ENCODE measurements at regions of chr17 and their contacts with region 1.

Region 1: GRCh38 chr17:5706577-5707216 is 122.4 kb upstream of the NLRP1 start:
- DNase-seq: peak; percentile 18 to 43
- ATAC-seq: peak; percentile 79 to 80
- H3K4me3 ChIP-seq: no peak overlapping the region
- H3K27ac ChIP-seq: no peak overlapping the region
- H3K4me1 ChIP-seq: peaks cover 0 to 3% of the 10 kb centered on the region in 2 donors
- H3K27me3 ChIP-seq: peaks cover 0 to 10% (median 0%) of the 10 kb centered on the region in 3 donors
- CTCF ChIP-seq: peak; percentile 43 to 73 (median 64)
- POLR2A ChIP-seq: no peak

Region 2: DNA sequence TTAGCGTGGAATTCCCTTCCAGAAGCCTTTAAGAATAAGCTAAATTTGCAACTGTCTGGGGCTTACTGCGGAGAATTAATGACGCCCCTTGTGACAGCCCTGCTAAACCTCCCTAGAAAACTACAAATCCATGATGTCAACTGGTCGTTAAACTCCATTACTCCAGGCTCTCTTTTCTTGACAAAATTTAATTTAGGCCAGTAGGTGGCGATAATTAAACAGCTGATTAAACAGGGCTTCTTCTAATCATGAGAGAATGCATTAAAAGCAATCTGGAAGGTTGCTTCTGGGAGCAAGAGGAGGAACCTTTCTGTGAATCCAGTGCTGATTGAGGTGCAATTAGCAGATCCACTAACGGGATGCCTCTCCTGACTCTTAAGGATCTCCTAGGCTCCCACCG is 114.3 kb before region 1 on chr17:
- in situ Hi-C with region 1: loop called (anchors 5 to 25 kb)
- intact Hi-C with region 1: loop called (anchors 1 kb)
- DNase-seq: no peak
- ATAC-seq: peak in 1 of 2 donors; percentile 36
- H3K4me3 ChIP-seq: no peak overlapping the region
- H3K27ac ChIP-seq: no peak overlapping the region
- H3K4me1 ChIP-seq: no peaks in the 10 kb centered on the region
- H3K27me3 ChIP-seq: peaks cover 0 to 17% (median 16%) of the 10 kb centered on the region in 3 donors
- CTCF ChIP-seq: peak; percentile 50 to 68 (median 56)
- POLR2A ChIP-seq: no peak

Region 3: DNA sequence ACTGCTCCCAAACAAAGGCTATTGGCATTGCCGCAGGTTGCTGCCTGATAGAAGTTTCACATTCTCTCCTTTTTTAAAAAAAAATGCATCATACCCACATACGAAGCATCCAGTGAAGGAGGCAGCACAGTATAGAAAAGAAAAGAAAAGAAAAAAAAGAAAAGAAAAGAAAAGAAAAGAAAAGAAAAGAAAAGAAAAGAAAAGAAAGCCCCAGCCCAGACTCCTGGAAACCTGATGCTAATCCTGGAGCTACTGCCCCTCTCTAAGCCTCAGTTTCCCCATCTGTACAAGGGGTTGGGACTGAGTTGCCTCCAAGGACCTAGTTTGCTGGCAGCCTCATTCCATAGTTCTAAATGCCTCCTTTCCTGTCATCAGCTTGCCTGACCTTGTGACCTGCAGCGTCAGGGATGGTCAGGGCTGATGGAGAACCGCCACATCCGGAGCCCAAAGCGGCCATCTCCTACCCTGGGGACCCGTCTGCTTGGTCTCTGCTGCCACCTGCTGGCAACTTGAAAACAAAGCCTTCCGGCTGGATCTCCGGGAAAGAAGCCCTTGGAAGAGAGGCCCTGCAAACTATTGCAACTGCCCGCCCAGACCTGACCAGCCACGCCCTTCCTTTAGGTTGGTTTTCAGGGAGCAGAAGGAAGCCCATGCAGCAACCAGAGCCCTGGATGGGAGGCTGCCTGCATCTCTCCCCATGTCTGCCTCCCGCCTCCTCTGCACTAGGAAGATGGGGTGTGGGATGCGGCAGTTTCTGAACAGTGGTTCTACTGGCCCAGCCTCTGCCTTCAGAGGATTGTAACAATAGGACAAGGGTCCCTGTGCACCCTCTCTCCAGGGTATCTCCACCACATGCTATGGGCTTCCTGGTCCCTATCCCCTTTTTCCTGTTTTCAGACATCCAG is 715.3 kb after region 1 on chr17:
- in situ Hi-C with region 1: loop called in 1 of 4 experiments (anchors 25 kb)
- intact Hi-C with region 1: no loop called
- DNase-seq: peak; percentile 27 to 55
- ATAC-seq: peak; percentile 39 to 79
- H3K4me3 ChIP-seq: no peak overlapping the region
- H3K27ac ChIP-seq: no peak overlapping the region
- H3K4me1 ChIP-seq: no peaks in the 10 kb centered on the region
- H3K27me3 ChIP-seq: no peaks in the 10 kb centered on the region
- CTCF ChIP-seq: peak; percentile 75 to 87 (median 85)
- POLR2A ChIP-seq: no peak

Measured in gastrocnemius medialis (tissue), 4 donors.